ENCODE measurements at regions of chr2 and their contacts with region 1.

Region 1: DNA sequence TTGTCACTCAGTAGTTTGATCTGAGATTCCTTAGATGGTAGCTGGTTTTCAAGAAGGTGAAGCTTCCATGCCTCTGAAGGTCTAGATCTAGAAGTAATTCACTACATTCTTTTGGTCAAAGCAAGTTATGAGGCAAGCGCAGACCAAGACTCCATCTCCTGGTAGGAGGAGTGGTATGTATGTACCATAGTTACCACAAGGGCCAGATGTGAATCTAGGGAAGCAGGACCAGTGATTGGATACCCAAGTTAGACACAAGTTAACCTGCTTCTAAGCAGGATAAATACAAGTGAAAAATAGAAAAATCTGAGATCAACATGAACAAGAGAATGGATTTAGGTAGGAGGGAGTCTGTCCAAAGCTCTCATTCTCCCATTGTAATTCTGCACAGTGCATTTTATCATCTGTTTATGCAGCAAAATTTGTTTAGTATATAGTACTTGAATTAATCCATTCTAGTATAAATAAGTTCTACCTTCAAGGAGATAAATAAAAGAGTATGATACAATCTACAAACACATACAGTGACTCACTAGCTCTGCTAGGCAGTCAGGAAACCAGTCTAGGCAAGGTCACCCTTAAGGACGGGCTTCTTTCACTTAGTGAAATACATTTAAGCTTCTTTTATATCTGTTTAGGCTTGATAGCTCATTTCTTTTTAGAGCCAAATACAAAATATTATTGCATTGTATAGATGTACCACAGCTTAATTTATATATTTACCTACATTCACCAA is 14.2 kb upstream of the DOCK10 start:
- DNase-seq: no peak
- H3K4me3 Mint-ChIP-seq: no peak overlapping the region
- H3K27ac Mint-ChIP-seq: no peak overlapping the region
- H3K4me1 Mint-ChIP-seq: peaks cover 61% of the 10 kb centered on the region
- H3K27me3 Mint-ChIP-seq: no peaks in the 10 kb centered on the region

Region 2: GRCh38 chr2:225041851-225042799 is 14.4 kb before region 1 on chr2 and contains the start of gene DOCK10:
- CTCF ChIA-PET with region 1: interaction called, 10 read pairs
- DNase-seq: peak; percentile 69
- H3K4me3 Mint-ChIP-seq: peak within 1 kb of the TSS; percentile 98
- H3K27ac Mint-ChIP-seq: peak within 1 kb of the TSS; percentile 99
- H3K4me1 Mint-ChIP-seq: peaks cover 52% of the 10 kb centered on the region
- H3K27me3 Mint-ChIP-seq: peaks cover 22% of the 10 kb centered on the region